PC-9 (cell line): ENCODE measurements at regions of chr7 and their contacts with region 1.

Region 1: DNA sequence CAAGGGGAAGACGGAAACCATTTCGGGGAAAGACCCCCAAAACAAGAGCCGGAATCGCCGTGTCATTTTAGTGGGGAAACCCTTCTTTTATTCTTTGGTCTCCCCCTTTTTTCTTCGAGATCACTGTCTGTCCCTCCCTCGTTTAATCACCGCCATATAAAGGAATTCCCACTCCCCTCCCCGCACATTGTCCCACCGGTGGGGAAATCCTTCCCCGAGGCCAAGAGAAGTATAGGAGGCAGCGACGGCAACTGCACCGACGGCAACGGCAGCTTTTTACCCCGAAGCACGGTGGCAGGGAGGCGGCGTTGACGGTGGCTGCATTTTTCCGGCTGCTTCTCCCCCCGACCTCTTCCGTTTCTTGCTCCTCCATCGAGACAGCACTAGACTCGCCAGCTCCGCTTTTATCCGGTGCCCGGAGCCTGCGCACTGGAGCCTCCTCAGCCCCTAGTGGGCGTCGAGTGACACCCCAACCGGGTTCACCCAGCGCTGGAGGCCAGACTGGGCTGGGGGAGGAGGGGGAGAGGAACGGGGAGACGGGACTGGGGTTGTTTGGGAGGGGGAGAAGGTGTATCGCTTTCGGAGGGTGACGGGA is 687 bp upstream of the KMT2E start:
- DNase-seq: peak; percentile 74 to 92
- H3K4me3 ChIP-seq: peak overlapping the region; percentile 95
- H3K27ac ChIP-seq: peak overlapping the region; percentile 98
- H3K4me1 ChIP-seq: peaks cover 55% of the 10 kb centered on the region
- H3K27me3 ChIP-seq: no peaks in the 10 kb centered on the region
- CTCF ChIP-seq: peak; percentile 55; the same call in 1 of the 2 replicates

Region 2: DNA sequence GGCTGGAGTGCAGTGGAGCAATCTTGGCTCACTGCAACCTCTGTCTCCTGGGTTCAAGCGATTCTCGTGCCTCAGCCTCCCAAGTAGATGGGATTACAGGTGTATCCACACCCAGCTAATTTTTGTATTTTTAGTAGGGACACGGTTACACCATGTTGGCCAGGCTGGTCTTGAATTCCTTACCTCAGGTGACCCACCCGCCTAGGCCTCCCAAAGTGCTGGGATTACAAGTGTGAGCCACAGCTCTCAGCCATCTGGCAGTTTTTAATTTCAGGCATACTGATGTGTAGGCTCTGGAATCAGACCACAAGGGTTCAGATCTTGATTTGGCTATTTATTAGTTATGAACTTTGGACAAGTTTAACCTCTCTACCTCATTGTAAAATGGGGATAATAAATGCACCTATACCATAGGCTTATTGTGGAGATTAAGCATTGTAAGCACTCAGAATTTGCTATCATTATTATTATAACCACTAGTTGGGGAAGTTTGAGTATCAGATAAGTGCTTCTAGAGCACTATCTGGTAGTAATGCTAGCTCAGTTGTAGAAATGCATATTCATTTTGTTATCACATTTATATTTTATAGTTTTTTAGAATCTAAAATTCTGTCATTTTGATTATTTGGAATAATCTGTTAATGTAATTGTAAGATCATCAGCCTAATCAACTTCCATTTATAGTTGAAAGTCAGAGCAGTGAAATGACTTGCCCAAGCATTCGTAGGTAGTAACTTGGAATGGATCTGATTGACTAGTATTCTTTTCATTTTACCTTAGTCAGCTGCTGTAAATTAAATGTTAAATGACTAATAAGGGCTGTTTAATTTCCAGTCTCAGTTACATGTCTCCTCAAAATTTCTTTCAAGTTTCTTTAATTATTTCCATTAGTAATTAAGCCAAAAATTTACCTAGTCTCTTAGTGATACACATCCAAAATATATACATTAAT is 23.2 kb after region 1 on chr7:
- CTCF ChIA-PET with region 1: interaction called, 19 read pairs
- POLR2A ChIA-PET with region 1: no interaction called
- intact Hi-C with region 1: no loop called
- DNase-seq: no peak
- H3K4me3 ChIP-seq: no peak overlapping the region
- H3K27ac ChIP-seq: no peak overlapping the region
- H3K4me1 ChIP-seq: no peaks in the 10 kb centered on the region
- H3K27me3 ChIP-seq: no peaks in the 10 kb centered on the region
- CTCF ChIP-seq: no peak

Region 3: GRCh38 chr7:105046414-105046813 is 33.1 kb after region 1 on chr7:
- CTCF ChIA-PET with region 1: interaction called, 7 read pairs
- POLR2A ChIA-PET with region 1: no interaction called
- intact Hi-C with region 1: loop called (anchors 5 kb)
- DNase-seq: peak in 1 of 2 experiments; percentile 78
- H3K4me3 ChIP-seq: no peak overlapping the region
- H3K27ac ChIP-seq: peak overlapping the region; percentile 31
- H3K4me1 ChIP-seq: peaks cover 13% of the 10 kb centered on the region
- H3K27me3 ChIP-seq: no peaks in the 10 kb centered on the region
- CTCF ChIP-seq: no peak

Region 4: DNA sequence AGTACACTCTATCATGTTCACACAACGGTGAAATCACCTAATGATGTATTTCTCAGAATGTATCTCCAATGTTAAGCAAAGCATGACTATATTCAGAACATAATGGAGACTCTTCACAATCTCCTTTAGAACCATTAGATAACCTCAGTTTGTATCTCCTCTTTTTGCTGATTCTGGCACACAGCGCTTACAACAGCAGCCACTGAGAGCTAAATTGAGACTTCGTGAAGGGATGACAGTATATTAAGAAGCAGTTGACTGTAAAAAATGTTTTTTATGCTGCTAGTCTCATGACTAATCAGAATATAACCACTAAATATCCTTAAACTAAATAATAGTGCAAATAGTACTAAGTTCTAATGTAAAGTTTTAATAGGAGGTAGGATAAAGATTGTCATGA is 47.6 kb after region 1 on chr7:
- CTCF ChIA-PET with region 1: no interaction called
- POLR2A ChIA-PET with region 1: interaction called, 11 read pairs
- intact Hi-C with region 1: no loop called
- DNase-seq: no peak
- H3K4me3 ChIP-seq: no peak overlapping the region
- H3K27ac ChIP-seq: no peak overlapping the region
- H3K4me1 ChIP-seq: no peaks in the 10 kb centered on the region
- H3K27me3 ChIP-seq: no peaks in the 10 kb centered on the region
- CTCF ChIP-seq: no peak

Region 5: GRCh38 chr7:105098863-105099515 is 85.7 kb after region 1 on chr7:
- CTCF ChIA-PET with region 1: no interaction called
- POLR2A ChIA-PET with region 1: interaction called, 10 read pairs
- intact Hi-C with region 1: loop called (anchors 1 kb)
- DNase-seq: peak in 1 of 2 experiments; percentile 75
- H3K4me3 ChIP-seq: no peak overlapping the region
- H3K27ac ChIP-seq: peak overlapping the region; percentile 60
- H3K4me1 ChIP-seq: peaks cover 7% of the 10 kb centered on the region; the same call in 1 of the 2 replicates
- H3K27me3 ChIP-seq: no peaks in the 10 kb centered on the region
- CTCF ChIP-seq: no peak

Region 6: GRCh38 chr7:105219780-105220160 is 206.5 kb after region 1 on chr7:
- CTCF ChIA-PET with region 1: no interaction called
- POLR2A ChIA-PET with region 1: no interaction called
- intact Hi-C with region 1: no loop called
- DNase-seq: peak; percentile 26 to 96
- H3K4me3 ChIP-seq: no peak overlapping the region
- H3K27ac ChIP-seq: peak overlapping the region; percentile 80
- H3K4me1 ChIP-seq: peaks cover 43% of the 10 kb centered on the region
- H3K27me3 ChIP-seq: no peaks in the 10 kb centered on the region
- CTCF ChIP-seq: no peak

Region 7: GRCh38 chr7:105439174-105439893 is 426.0 kb after region 1 on chr7:
- CTCF ChIA-PET with region 1: no interaction called
- POLR2A ChIA-PET with region 1: no interaction called
- intact Hi-C with region 1: loop called (anchors 2 kb)
- DNase-seq: peak; percentile 71 to 94
- H3K4me3 ChIP-seq: peak overlapping the region; percentile 12; the same call in 1 of the 2 replicates
- H3K27ac ChIP-seq: peak overlapping the region; percentile 82
- H3K4me1 ChIP-seq: peaks cover 22% of the 10 kb centered on the region
- H3K27me3 ChIP-seq: no peaks in the 10 kb centered on the region
- CTCF ChIP-seq: 0 out of 2 replicates have a peak, but pooled peaks have one; percentile 21